Tibial artery (tissue), 4 donors: ENCODE measurements at regions of chr22 and their contacts with region 1.

Region 1: GRCh38 chr22:43385770-43386641 is 25.8 kb upstream of the MPPED1 start:
- DNase-seq: peak; percentile 65 to 81
- H3K4me3 ChIP-seq: no peak overlapping the region
- H3K27ac ChIP-seq: no peak overlapping the region
- H3K4me1 ChIP-seq: peaks cover 0 to 4% (median 3%) of the 10 kb centered on the region in 4 donors
- H3K27me3 ChIP-seq: peaks cover 0 to 43% of the 10 kb centered on the region in 2 donors
- CTCF ChIP-seq: peak; percentile 86 to 92

Region 2: GRCh38 chr22:43230971-43231723 is 154.9 kb before region 1 on chr22:
- intact Hi-C with region 1: loop called (anchors 5 kb)
- DNase-seq: no peak
- H3K4me3 ChIP-seq: no peak overlapping the region
- H3K27ac ChIP-seq: no peak overlapping the region
- H3K4me1 ChIP-seq: peaks cover 0 to 11% (median 0%) of the 10 kb centered on the region in 4 donors
- H3K27me3 ChIP-seq: peaks cover 0 to 77% of the 10 kb centered on the region in 2 donors
- CTCF ChIP-seq: peak; percentile 69 to 81